Uterus (tissue), 4 donors: ENCODE measurements at regions of chr10 and their contacts with region 1.

Region 1: DNA sequence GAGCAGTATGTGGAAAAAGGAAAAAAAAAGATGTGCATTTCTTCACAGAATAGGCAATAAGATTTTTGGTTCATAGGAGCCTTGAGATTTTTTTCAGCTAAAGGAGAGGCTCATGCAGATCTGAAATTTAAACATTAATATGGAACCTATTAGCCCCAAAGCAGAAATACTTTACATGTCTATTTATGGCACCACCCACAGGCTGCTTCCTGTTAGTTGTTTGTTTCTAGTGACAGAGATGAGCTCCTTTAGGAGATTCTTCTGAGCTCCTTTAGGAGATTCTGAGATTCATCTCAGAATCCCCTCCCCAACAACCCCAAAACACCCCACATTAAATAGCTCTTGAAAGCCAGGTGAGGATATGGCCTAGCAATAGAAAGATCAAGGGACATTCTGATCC is 27.9 kb upstream of the HPS1 start:
- DNase-seq: no peak
- H3K4me3 ChIP-seq: no peak overlapping the region
- H3K27ac ChIP-seq: no peak overlapping the region
- H3K4me1 ChIP-seq: no peaks in the 10 kb centered on the region
- H3K27me3 ChIP-seq: no peaks in the 10 kb centered on the region
- CTCF ChIP-seq: no peak
- POLR2A ChIP-seq: no peak

Region 2: DNA sequence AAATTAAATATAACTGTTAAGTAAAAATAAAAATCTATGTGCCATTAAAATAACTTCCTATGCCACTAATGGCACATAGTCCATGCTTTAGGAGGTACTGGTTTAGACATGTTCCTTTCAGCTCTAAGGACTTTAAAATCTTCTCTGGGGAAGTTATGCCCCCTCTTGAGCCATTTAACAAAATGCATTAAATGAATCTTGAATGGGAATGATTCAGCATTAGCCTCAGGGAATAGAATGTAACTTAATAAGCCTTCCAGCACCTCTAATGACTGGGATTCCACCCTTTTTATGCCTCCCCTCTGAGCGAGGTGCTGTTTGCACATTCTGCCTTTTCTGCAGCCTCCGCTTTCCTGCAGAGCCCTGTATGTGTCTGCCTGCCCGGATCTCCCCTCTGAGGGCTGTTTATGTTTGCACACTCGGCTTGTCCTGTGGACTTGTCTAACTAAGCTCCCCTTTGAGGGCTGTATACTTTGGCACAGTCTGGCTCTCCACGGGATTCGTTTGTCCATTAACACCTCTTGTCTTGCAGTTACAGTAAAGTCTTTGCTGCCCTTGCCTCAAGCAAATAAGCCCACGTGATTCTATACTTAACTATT is 80.5 kb after region 1 on chr10:
- intact Hi-C with region 1: no loop called
- DNase-seq: no peak
- H3K4me3 ChIP-seq: no peak overlapping the region
- H3K27ac ChIP-seq: no peak overlapping the region
- H3K4me1 ChIP-seq: no peaks in the 10 kb centered on the region
- H3K27me3 ChIP-seq: no peaks in the 10 kb centered on the region
- CTCF ChIP-seq: no peak
- POLR2A ChIP-seq: no peak

Region 3: GRCh38 chr10:98619446-98619845 is 144.8 kb after region 1 on chr10:
- intact Hi-C with region 1: no loop called
- DNase-seq: no peak
- H3K4me3 ChIP-seq: no peak overlapping the region
- H3K27ac ChIP-seq: no peak overlapping the region
- H3K4me1 ChIP-seq: no peaks in the 10 kb centered on the region
- H3K27me3 ChIP-seq: no peaks in the 10 kb centered on the region
- CTCF ChIP-seq: no peak
- POLR2A ChIP-seq: no peak

Region 4: GRCh38 chr10:98778277-98778759 is 303.7 kb after region 1 on chr10:
- intact Hi-C with region 1: no loop called
- DNase-seq: no peak
- H3K4me3 ChIP-seq: no peak overlapping the region
- H3K27ac ChIP-seq: no peak overlapping the region
- H3K4me1 ChIP-seq: no peaks in the 10 kb centered on the region
- H3K27me3 ChIP-seq: no peaks in the 10 kb centered on the region
- CTCF ChIP-seq: no peak
- POLR2A ChIP-seq: no peak

Region 5: DNA sequence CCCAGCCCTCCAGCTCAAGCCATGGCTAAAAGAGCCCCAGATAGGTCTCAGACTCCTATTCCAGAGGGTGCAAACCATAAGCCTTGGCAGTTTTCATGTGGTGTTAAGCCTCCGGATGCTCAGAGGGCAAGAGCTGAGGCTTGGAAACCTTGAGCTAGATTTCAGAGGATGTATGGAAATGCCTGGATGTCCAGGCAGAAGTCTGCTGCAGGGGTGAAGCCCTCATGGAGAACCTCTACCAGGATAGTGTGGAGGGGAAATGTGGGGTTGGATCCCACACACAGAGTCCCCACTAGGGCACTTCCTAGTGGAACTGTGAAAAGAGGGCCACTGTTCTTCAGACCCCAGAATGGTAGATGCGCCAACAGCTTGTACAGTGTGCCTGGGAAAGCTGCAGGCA is 774.2 kb after region 1 on chr10:
- intact Hi-C with region 1: loop called (anchors 10 kb)
- DNase-seq: no peak
- H3K4me3 ChIP-seq: no peak overlapping the region
- H3K27ac ChIP-seq: no peak overlapping the region
- H3K4me1 ChIP-seq: no peaks in the 10 kb centered on the region
- H3K27me3 ChIP-seq: no peaks in the 10 kb centered on the region
- CTCF ChIP-seq: no peak
- POLR2A ChIP-seq: no peak